Mammary epithelial cell (primary cell): ENCODE measurements at regions of chr5 and their contacts with region 1.

Region 1: DNA sequence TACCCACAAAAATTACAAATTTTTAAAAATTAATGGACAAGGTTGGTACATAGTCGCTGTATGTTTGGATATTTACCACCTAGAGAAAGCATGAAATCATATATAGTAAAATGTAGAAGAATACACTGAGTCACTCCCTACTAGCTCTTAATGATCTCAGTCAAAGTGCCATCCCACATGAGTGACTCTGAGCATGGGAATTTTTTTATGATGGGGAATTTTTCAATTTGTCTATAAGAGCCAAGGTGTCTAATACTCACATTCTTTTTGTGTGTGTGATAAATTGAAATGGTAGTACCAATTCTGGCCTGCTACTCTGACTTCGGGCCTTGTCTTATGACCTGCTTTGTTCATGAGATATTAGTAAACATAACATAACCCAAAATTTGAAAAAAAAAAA is 483.2 kb downstream of the CDH10 start:
- DNase-seq: peak; percentile 59
- H3K4me3 ChIP-seq: no peak overlapping the region
- H3K27ac ChIP-seq: peak overlapping the region; percentile 96
- H3K4me1 ChIP-seq: peaks cover 19% of the 10 kb centered on the region
- H3K27me3 ChIP-seq: no peaks in the 10 kb centered on the region
- CTCF ChIP-seq: no peak

Region 2: GRCh38 chr5:23571059-23571458 is 590.5 kb before region 1 on chr5:
- CTCF ChIA-PET with region 1: no interaction called
- dilution Hi-C with region 1: no loop called
- in situ Hi-C with region 1: no loop called
- intact Hi-C with region 1: no loop called
- DNase-seq: no peak
- H3K4me3 ChIP-seq: no peak overlapping the region
- H3K27ac ChIP-seq: no peak overlapping the region
- H3K4me1 ChIP-seq: no peaks in the 10 kb centered on the region
- H3K27me3 ChIP-seq: no peaks in the 10 kb centered on the region
- CTCF ChIP-seq: no peak

Region 3: GRCh38 chr5:24135536-24135935 is 26.0 kb before region 1 on chr5:
- CTCF ChIA-PET with region 1: no interaction called
- dilution Hi-C with region 1: no loop called
- in situ Hi-C with region 1: no loop called
- intact Hi-C with region 1: loop called (anchors 2 kb)
- DNase-seq: peak; percentile 17
- H3K4me3 ChIP-seq: no peak overlapping the region
- H3K27ac ChIP-seq: no peak overlapping the region
- H3K4me1 ChIP-seq: peaks cover 3% of the 10 kb centered on the region
- H3K27me3 ChIP-seq: no peaks in the 10 kb centered on the region
- CTCF ChIP-seq: no peak

Region 4: GRCh38 chr5:24749701-24750100 is 588.1 kb after region 1 on chr5:
- CTCF ChIA-PET with region 1: no interaction called
- dilution Hi-C with region 1: no loop called
- in situ Hi-C with region 1: no loop called
- intact Hi-C with region 1: no loop called
- DNase-seq: no peak
- H3K4me3 ChIP-seq: no peak overlapping the region
- H3K27ac ChIP-seq: no peak overlapping the region
- H3K4me1 ChIP-seq: no peaks in the 10 kb centered on the region
- H3K27me3 ChIP-seq: no peaks in the 10 kb centered on the region
- CTCF ChIP-seq: no peak